WTC11 (cell line): ENCODE measurements at regions of chr6 and their contacts with region 1.

Region 1: GRCh38 chr6:109382576-109383437 is 540 bp upstream of the CD164 start:
- DNase-seq: peak; percentile 89
- ATAC-seq: peak; percentile 79
- H3K4me3 Mint-ChIP-seq: peak overlapping the region; percentile 92
- H3K27ac Mint-ChIP-seq: peak overlapping the region; percentile 99
- H3K4me1 Mint-ChIP-seq: peaks cover 28% of the 10 kb centered on the region
- H3K27me3 Mint-ChIP-seq: no peaks in the 10 kb centered on the region
- CTCF ChIP-seq: 0 out of 2 replicates have a peak, but pooled peaks have one; percentile 23

Region 2: GRCh38 chr6:109187399-109188114 is 195.2 kb before region 1 on chr6:
- CTCF ChIA-PET with region 1: interaction called, 27 read pairs
- POLR2A ChIA-PET with region 1: no interaction called
- DNase-seq: peak; percentile 70
- ATAC-seq: peak; percentile 85
- H3K4me3 Mint-ChIP-seq: no peak overlapping the region
- H3K27ac Mint-ChIP-seq: no peak overlapping the region
- H3K4me1 Mint-ChIP-seq: peaks cover 22% of the 10 kb centered on the region
- H3K27me3 Mint-ChIP-seq: peaks cover 3% of the 10 kb centered on the region; the same call in 1 of the 2 replicates
- CTCF ChIP-seq: peak; percentile 88

Region 3: GRCh38 chr6:109202409-109203284 is 180.2 kb before region 1 on chr6:
- CTCF ChIA-PET with region 1: no interaction called
- POLR2A ChIA-PET with region 1: no interaction called
- DNase-seq: no peak
- ATAC-seq: no peak; the same call in 1 of the 2 replicates
- H3K4me3 Mint-ChIP-seq: no peak overlapping the region
- H3K27ac Mint-ChIP-seq: no peak overlapping the region
- H3K4me1 Mint-ChIP-seq: no peaks in the 10 kb centered on the region
- H3K27me3 Mint-ChIP-seq: no peaks in the 10 kb centered on the region
- CTCF ChIP-seq: no peak

Region 4: DNA sequence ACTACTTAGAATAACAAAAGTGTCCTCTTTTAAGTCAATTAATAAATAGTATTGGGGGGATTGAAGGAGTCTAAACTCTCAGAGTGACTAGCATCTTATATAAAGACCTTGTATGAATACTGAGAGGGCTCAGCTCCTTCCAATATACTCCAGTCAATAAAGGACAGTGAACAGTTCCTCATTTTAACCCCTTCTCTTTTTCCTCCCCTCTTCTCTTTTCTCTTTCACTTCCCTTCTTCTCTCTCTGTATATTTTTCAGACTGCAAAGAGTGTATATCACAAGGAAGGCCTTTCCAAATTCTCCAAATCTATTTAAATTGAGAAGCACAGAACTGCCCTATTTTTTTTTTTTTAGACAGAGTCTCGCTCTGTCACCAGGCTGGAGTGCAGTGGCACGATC is 100.1 kb before region 1 on chr6:
- CTCF ChIA-PET with region 1: no interaction called
- POLR2A ChIA-PET with region 1: no interaction called
- DNase-seq: no peak
- ATAC-seq: no peak
- H3K4me3 Mint-ChIP-seq: no peak overlapping the region
- H3K27ac Mint-ChIP-seq: no peak overlapping the region
- H3K4me1 Mint-ChIP-seq: no peaks in the 10 kb centered on the region
- H3K27me3 Mint-ChIP-seq: no peaks in the 10 kb centered on the region
- CTCF ChIP-seq: no peak